CD4-positive, alpha-beta T cell (primary cell): ENCODE measurements at regions of chr1 and their contacts with region 1.

Region 1: DNA sequence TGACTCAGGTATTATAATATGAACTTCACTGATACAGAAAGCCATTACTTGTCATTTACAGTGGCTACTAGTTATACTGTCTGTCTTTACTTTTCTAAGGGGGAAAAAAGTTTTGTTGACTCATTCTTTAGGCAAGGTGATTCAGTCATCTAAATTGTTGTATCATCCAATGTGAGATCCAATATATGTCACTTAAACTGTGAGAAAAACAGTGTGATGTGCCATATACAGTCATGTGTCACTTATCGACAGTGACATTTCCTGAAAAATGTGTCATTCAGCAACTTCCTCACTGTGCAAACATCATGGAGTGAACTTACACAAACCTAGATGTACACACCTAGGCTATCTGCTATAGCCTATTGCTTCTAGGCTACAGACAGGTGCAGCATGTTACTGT is 57.6 kb downstream of the KCNK2 start:
- DNase-seq: peak in 1 of 14 experiments; percentile 1
- ATAC-seq: no peak
- H3K4me3 ChIP-seq: no peak overlapping the region
- H3K4me3 Mint-ChIP-seq: no peak overlapping the region
- H3K27ac ChIP-seq: no peak overlapping the region
- H3K27ac Mint-ChIP-seq: no peak overlapping the region
- H3K4me1 ChIP-seq: no peaks in the 10 kb centered on the region
- H3K4me1 Mint-ChIP-seq: no peaks in the 10 kb centered on the region
- H3K27me3 ChIP-seq: no peaks in the 10 kb centered on the region
- H3K27me3 Mint-ChIP-seq: peaks cover 7% of the 10 kb centered on the region
- CTCF ChIP-seq: no peak

Region 2: DNA sequence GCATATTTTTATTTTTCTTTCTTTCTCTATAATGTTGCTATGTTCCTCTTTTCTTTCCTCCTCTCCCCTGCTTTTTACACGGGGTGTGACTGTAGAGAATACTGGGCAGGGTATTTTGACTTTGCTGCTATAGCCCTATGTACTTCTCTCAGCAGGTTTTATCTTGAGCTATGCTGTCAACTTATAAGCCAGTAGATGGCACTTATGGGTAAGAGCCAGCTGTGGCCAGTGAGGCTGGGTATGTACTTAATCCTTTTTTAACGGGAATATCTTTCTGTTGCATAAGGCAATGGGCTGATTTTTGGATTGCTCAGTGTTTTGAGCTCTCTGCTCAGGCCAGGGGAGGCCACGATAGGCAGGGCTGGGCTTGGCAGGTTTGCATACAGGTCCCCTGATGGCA is 41.4 kb after region 1 on chr1:
- CTCF ChIA-PET with region 1: no interaction called
- POLR2A ChIA-PET with region 1: no interaction called
- intact Hi-C with region 1: loop called in 1 of 2 experiments (anchors 5 kb)
- DNase-seq: no peak
- ATAC-seq: no peak
- H3K4me3 ChIP-seq: no peak overlapping the region
- H3K4me3 Mint-ChIP-seq: no peak overlapping the region
- H3K27ac ChIP-seq: no peak overlapping the region
- H3K27ac Mint-ChIP-seq: no peak overlapping the region
- H3K4me1 ChIP-seq: no peaks in the 10 kb centered on the region
- H3K4me1 Mint-ChIP-seq: no peaks in the 10 kb centered on the region
- H3K27me3 ChIP-seq: no peaks in the 10 kb centered on the region
- H3K27me3 Mint-ChIP-seq: peaks cover 4% of the 10 kb centered on the region
- CTCF ChIP-seq: no peak